ENCODE measurements at regions of chr11 and their contacts with region 1.

Region 1: DNA sequence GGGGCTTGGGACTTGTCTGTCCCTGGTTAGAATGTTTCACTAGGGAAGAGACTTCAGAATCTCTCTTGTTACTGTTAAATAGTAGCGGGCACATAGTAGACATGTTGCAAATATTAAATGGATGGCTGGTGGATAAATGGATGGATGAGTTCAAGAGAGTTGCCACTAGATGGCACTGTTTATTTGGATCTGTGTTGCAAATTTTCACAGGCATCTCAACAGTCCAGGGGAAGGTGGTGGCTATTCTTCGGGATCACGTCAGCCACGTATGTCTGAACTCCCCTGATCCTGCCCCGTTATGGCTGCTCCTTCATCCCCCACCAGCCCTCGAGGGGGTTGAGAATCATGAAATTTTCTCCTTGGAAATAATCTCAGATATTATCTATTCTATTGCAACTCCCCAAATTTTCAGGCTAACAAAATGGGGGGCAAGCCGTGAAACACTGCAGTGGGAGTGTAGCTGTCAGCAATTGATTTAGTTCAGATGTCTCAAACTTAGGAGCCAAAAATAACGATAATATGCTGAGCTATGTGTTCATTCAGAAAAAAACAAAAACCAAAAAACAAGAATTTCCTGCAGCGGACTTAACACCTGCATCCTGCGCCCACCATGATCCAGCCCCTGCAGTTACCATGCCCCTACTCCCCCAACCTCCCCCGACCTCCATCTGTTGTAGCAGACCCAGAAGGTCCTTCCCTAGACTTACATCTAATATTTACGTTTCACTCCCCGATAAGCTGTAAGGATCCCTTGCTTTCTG is 29.1 kb upstream of the BIRC3 start:
- DNase-seq: peak; percentile 81
- ATAC-seq: peak; percentile 91
- H3K4me3 ChIP-seq: peak overlapping the region; percentile 18 to 47
- H3K27ac ChIP-seq: peak overlapping the region; percentile 95
- H3K4me1 ChIP-seq: peaks cover 46% of the 10 kb centered on the region
- H3K27me3 ChIP-seq: no peaks in the 10 kb centered on the region
- CTCF ChIP-seq: peak; percentile 86

Region 2: GRCh38 chr11:102341844-102342318 is 53.7 kb after region 1 on chr11:
- CTCF ChIA-PET with region 1: interaction called, 12 read pairs
- POLR2A ChIA-PET with region 1: no interaction called
- in situ Hi-C with region 1: no loop called
- intact Hi-C with region 1: no loop called
- DNase-seq: no peak
- ATAC-seq: peak; percentile 70
- H3K4me3 ChIP-seq: no peak overlapping the region
- H3K27ac ChIP-seq: peak overlapping the region; percentile 75
- H3K4me1 ChIP-seq: peaks cover 38% of the 10 kb centered on the region
- H3K27me3 ChIP-seq: no peaks in the 10 kb centered on the region
- CTCF ChIP-seq: peak; percentile 91

Measured in Panc1 (cell line).